ENCODE measurements at regions of chr9 and their contacts with region 1.

Region 1: GRCh38 chr9:129783516-129784361 is 19.2 kb upstream of the TOR1B start:
- DNase-seq: peak; percentile 75
- H3K4me3 ChIP-seq: no peak overlapping the region
- H3K27ac ChIP-seq: no peak overlapping the region
- H3K4me1 ChIP-seq: no peaks in the 10 kb centered on the region
- CTCF ChIP-seq: peak; percentile 95

Region 2: GRCh38 chr9:129641746-129642513 is 141.8 kb before region 1 on chr9 and contains the start of gene ASB6:
- CTCF ChIA-PET with region 1: no interaction called
- POLR2A ChIA-PET with region 1: no interaction called
- intact Hi-C with region 1: loop called (anchors 2 kb)
- DNase-seq: peak; percentile 93
- H3K4me3 ChIP-seq: peak within 1 kb of the TSS; percentile 97
- H3K27ac ChIP-seq: peak within 1 kb of the TSS; percentile 9
- H3K4me1 ChIP-seq: peaks cover 11% of the 10 kb centered on the region
- CTCF ChIP-seq: peak; percentile 97
- total RNA-seq, gene ASB6: 17.5 and 21.4 TPM in 2 replicates

Region 3: GRCh38 chr9:129726322-129727160 is 57.2 kb before region 1 on chr9:
- CTCF ChIA-PET with region 1: no interaction called
- POLR2A ChIA-PET with region 1: no interaction called
- intact Hi-C with region 1: loop called (anchors 1 kb)
- DNase-seq: peak; percentile 57
- H3K4me3 ChIP-seq: no peak overlapping the region
- H3K27ac ChIP-seq: no peak overlapping the region
- H3K4me1 ChIP-seq: no peaks in the 10 kb centered on the region
- CTCF ChIP-seq: peak; percentile 94

Region 4: DNA sequence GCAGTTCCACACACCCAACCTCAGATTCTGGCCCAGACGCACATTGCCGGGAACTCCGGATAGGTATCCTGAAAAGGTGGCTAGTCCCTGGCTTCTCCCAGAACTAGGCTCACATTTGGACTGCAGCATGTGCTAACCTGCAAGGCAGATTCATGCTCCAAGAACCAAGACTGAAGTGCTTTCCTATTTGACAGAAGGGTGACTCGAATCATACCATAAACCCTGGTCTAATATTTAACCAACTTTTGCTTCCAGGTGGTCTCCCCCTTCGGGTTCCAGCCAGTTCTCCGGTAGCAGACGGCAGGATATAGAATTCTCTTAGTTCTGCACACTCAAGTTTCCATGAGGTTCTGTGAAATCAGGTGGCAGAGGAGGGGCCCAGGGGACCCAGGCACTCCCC is 38.5 kb before region 1 on chr9:
- CTCF ChIA-PET with region 1: no interaction called
- POLR2A ChIA-PET with region 1: no interaction called
- intact Hi-C with region 1: no loop called
- DNase-seq: no peak
- H3K4me3 ChIP-seq: no peak overlapping the region
- H3K27ac ChIP-seq: no peak overlapping the region
- H3K4me1 ChIP-seq: no peaks in the 10 kb centered on the region
- CTCF ChIP-seq: no peak

Measured in OCI-LY7 (cell line).